Heart right ventricle (tissue), 16 donors: ENCODE measurements at regions of chr9 and their contacts with region 1.

Region 1: GRCh38 chr9:32589083-32589723 is 16.2 kb upstream of the NDUFB6 start:
- DNase-seq: no peak
- ATAC-seq: peak in 1 of 8 donors; percentile 55
- H3K4me3 ChIP-seq: no peak overlapping the region
- H3K27ac ChIP-seq: no peak overlapping the region
- H3K4me1 ChIP-seq: no peaks in the 10 kb centered on the region
- H3K27me3 ChIP-seq: peaks cover 0 to 25% (median 17%) of the 10 kb centered on the region in 7 donors
- CTCF ChIP-seq: peak in 7 of 9 donors; percentile 38 to 63 (median 48)

Region 2: DNA sequence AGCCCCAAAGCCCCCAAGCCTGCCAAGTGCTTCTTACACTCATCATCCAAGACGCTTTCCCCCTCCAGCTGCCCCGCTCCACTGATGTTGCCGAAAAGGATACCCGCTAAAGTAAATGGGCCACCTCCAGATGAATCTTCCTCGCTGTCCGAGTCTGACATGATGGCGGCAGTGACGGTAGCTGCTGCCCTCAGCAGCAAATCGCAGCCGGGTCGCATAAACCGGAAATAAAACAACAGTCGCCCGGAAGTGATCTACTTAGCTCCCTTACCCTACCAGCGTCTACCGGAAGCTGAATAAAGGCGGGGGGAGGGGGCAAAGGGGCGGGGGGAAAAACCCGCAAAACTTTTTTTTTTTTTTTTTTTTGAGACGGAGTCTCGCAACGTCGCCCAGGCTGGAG is 46.2 kb after region 1 on chr9 and contains the start of gene TAF1L:
- intact Hi-C with region 1: loop called in 1 of 10 experiments (anchors 5 kb)
- DNase-seq: no peak
- ATAC-seq: no peak
- H3K4me3 ChIP-seq: no peak within 1 kb of the TSS
- H3K27ac ChIP-seq: no peak within 1 kb of the TSS
- H3K4me1 ChIP-seq: no peaks in the 10 kb centered on the region
- H3K27me3 ChIP-seq: peaks cover 0 to 6% (median 4%) of the 10 kb centered on the region in 7 donors
- CTCF ChIP-seq: no peak
- total RNA-seq, gene TAF1L: not detected

Region 3: DNA sequence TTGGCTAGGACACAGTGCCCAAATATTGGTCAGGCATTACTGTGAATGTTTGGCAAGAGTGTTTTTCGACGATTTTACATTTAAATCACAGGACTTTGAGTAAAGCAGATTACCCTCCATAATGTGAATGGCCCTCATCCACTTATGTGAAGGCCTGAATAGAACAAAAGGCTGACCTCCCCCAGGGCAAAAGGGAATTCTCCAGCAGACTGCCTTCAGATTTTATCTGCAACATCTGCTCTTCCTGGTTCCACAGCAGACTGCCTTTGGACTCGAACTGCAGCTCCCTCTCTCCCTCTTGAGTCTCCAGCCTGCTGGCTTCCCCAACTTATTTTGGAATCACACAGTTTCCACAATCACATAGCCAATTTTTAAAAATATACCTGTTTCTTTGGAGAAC is 187.0 kb after region 1 on chr9:
- intact Hi-C with region 1: loop called in 1 of 10 experiments (anchors 10 kb)
- DNase-seq: no peak
- ATAC-seq: no peak
- H3K4me3 ChIP-seq: no peak overlapping the region
- H3K27ac ChIP-seq: no peak overlapping the region
- H3K4me1 ChIP-seq: no peaks in the 10 kb centered on the region
- H3K27me3 ChIP-seq: peaks cover 0 to 28% (median 18%) of the 10 kb centered on the region in 7 donors
- CTCF ChIP-seq: no peak